SK-N-SH (cell line): ENCODE measurements at regions of chr10 and their contacts with region 1.

Region 1: GRCh38 chr10:68208424-68209042 is 23.4 kb downstream of the ATOH7 start:
- DNase-seq: peak; percentile 49
- H3K4me3 ChIP-seq: no peak overlapping the region
- H3K27ac ChIP-seq: no peak overlapping the region
- H3K4me1 ChIP-seq: no peaks in the 10 kb centered on the region
- H3K27me3 ChIP-seq: no peaks in the 10 kb centered on the region
- CTCF ChIP-seq: peak; percentile 68
- EP300 ChIP-seq: no peak
- RAD21 ChIP-seq: peak; percentile 82

Region 2: DNA sequence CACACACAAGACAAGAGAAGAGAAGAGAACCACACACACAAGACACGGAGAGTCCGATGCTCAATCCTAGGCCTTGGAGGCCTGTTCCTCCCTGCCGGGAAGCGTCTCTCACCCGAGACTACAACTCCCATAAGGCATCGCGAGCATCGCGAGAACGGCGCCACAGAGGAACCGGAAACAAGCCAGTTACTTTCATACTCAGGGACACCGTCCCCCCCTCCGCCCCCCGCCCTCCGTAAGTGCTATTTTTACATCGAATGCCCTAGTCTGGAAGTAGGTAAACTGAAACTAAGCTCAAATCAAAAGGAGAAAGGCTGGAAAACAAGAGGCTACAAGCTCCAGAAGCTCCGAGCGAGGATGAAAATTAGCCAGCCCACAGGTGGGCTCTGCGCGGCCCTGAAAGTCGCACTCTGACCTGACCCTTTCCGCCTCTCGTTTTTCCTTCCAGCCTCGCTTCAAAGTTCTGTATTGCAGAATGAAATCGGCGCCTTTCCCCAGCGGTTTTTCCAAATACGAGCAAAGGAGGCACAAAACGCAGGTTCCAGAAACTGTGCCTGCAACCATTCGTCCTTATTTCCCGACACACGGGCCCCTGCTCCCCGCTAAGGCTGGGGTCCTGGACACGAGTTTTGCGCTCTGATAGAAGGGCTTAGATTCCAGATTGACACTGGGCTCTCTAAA is 359.1 kb before region 1 on chr10:
- CTCF ChIA-PET with region 1: interaction called, 27 read pairs
- POLR2A ChIA-PET with region 1: no interaction called
- DNase-seq: peak; percentile 88
- H3K4me3 ChIP-seq: peak overlapping the region; percentile 69 to 86
- H3K27ac ChIP-seq: peak overlapping the region; percentile 89 to 91
- H3K4me1 ChIP-seq: peaks cover 0 to 3% of the 10 kb centered on the region in 2 experiments; a peak in 1 of 4 replicates
- H3K27me3 ChIP-seq: no peaks in the 10 kb centered on the region
- CTCF ChIP-seq: no peak
- EP300 ChIP-seq: no peak
- RAD21 ChIP-seq: no peak

Region 3: DNA sequence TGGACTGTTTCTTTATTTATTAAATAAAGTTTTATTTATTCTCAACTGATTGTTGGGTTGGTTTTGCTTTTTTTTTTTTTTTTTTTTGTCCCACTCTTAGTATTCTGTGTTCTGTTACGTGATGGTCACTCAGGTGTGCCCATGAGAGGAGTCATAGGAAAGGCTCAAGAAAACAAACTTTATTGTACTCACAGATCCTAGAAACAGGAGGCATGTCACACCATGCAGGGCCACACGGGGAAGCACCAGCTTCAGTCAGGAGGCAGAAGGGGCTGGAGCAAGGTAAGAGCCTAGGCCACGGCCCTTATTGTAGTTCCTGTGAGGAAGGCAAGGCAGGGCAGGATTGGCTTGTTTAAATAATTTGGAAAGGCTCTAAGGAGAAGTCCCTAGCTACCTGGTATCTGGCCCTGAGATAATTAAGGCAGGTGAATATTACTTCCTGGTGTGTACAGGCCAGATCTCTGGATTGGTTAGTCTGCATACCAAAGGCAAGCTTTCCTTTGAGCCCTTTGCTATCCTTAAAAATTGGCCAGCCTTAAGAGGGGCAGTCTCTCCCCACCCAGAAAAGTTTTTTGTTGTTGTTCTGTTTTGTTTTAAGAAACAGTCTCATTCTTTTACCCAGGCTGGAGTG is 15.1 kb after region 1 on chr10:
- CTCF ChIA-PET with region 1: interaction called, 29 read pairs
- POLR2A ChIA-PET with region 1: no interaction called
- DNase-seq: no peak
- H3K4me3 ChIP-seq: no peak overlapping the region
- H3K27ac ChIP-seq: no peak overlapping the region
- H3K4me1 ChIP-seq: no peaks in the 10 kb centered on the region
- H3K27me3 ChIP-seq: no peaks in the 10 kb centered on the region
- CTCF ChIP-seq: peak; percentile 7; the same call in 1 of the 2 replicates
- EP300 ChIP-seq: no peak
- RAD21 ChIP-seq: no peak

Region 4: GRCh38 chr10:68253346-68253745 is 44.8 kb after region 1 on chr10:
- CTCF ChIA-PET with region 1: interaction called, 10 read pairs
- POLR2A ChIA-PET with region 1: no interaction called
- DNase-seq: no peak
- H3K4me3 ChIP-seq: no peak overlapping the region
- H3K27ac ChIP-seq: no peak overlapping the region
- H3K4me1 ChIP-seq: no peaks in the 10 kb centered on the region
- H3K27me3 ChIP-seq: peaks cover 6% of the 10 kb centered on the region; the same call in 1 of the 2 replicates
- CTCF ChIP-seq: no peak
- EP300 ChIP-seq: no peak
- RAD21 ChIP-seq: no peak

Region 5: DNA sequence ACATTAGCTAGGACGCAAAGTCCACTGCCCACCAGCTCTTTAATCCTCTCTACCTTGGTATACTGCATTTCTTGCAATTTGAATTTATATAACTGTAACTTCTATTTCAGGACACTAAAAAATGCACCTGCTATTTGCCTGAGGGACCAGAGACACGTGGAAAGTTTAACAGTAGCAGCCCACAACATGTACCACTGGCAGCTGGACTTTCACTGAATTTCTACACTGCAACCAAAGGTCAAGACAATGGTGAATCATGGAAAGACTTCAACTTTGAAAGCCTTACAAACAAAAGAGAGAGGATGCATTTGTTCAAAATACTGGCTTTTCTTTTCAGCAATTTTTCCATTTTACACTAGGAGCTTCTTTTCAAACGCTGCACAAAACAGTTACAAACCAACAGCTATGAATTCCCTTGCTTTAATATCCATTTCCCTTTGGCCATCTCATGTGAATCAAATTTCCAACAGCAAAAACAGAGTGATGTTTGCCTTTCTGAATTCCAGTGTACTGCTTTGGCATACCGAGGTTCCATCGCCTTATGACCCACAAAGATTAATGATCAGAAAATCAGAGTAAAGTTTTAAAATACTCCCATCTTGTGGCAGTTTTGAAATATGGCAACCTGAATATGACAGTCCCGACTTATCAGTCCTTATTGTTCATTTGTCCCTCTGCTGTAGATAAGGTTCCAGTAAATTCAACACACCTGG is 93.4 kb after region 1 on chr10:
- CTCF ChIA-PET with region 1: interaction called, 111 read pairs
- POLR2A ChIA-PET with region 1: no interaction called
- DNase-seq: peak; percentile 59
- H3K4me3 ChIP-seq: no peak overlapping the region
- H3K27ac ChIP-seq: no peak overlapping the region
- H3K4me1 ChIP-seq: peaks cover 5 to 8% of the 10 kb centered on the region in 2 experiments; a peak in 2 of 4 replicates
- H3K27me3 ChIP-seq: no peaks in the 10 kb centered on the region
- CTCF ChIP-seq: peak; percentile 72
- EP300 ChIP-seq: no peak
- RAD21 ChIP-seq: peak; percentile 85

Region 6: DNA sequence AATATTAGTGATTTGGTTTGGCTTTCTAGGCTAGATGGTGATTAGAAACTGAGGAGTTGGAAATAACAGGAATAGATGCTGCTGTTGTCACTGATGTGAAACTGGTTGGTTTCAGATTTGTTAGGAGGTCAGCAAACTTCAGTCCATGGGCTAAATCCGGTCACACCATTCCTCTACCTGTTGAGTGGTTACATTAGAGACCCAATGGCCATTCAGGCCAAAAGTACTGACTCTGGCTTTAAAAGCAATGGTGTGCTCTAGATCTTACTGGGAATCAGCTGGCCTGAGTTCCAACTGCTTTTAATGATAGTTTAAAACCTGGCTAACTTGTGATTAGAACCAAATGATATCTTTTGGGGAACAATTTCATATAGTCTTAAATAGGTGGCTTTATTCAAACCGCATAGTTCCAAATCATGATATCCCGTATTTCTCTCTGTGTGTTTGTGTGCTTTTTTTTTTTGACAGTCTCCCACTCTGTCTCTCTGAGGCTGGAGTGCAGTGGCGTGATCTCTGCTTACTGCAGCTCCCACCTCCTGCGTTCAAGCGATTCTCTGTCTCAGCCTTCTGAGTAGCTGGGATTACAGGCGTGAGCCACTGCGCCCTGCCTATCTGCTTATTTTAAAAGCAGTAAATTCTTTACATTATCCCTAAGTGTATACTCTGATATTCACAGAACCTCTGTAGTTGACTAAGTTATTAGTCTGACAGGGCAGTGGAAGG is 132.0 kb after region 1 on chr10:
- CTCF ChIA-PET with region 1: interaction called, 11 read pairs
- POLR2A ChIA-PET with region 1: no interaction called
- DNase-seq: no peak
- H3K4me3 ChIP-seq: no peak overlapping the region
- H3K27ac ChIP-seq: no peak overlapping the region
- H3K4me1 ChIP-seq: peaks cover 13% of the 10 kb centered on the region in 2 experiments; a peak in 3 of 4 replicates
- H3K27me3 ChIP-seq: no peaks in the 10 kb centered on the region
- CTCF ChIP-seq: no peak
- EP300 ChIP-seq: no peak
- RAD21 ChIP-seq: no peak